GM12878 (cell line): ENCODE measurements at regions of chrX and their contacts with region 1.

Region 1: GRCh38 chrX:11381464-11381863 is 88.3 kb downstream of the AMELX start:
- DNase-seq: peak; percentile 30
- ATAC-seq: peak; percentile 97
- H3K4me3 ChIP-seq: no peak overlapping the region
- H3K27ac ChIP-seq: no peak overlapping the region
- H3K4me1 ChIP-seq: no peaks in the 10 kb centered on the region
- H3K27me3 ChIP-seq: no peaks in the 10 kb centered on the region
- CTCF ChIP-seq: peak; percentile 64 to 71 (median 70)
- EP300 ChIP-seq: no peak
- POLR2A ChIP-seq: no peak
- RAD21 ChIP-seq: peak; percentile 60

Region 2: GRCh38 chrX:11143931-11144678 is 237.4 kb before region 1 on chrX:
- CTCF ChIA-PET with region 1: interaction called, 4 read pairs
- POLR2A ChIA-PET with region 1: no interaction called
- RAD21 ChIA-PET with region 1: no interaction called
- SMC1A ChIA-PET with region 1: interaction called, 4 read pairs
- in situ Hi-C with region 1: no loop called
- intact Hi-C with region 1: loop called (anchors 1 kb)
- DNase-seq: peak; percentile 42
- ATAC-seq: peak; percentile 99
- H3K4me3 ChIP-seq: no peak overlapping the region
- H3K27ac ChIP-seq: no peak overlapping the region
- H3K4me1 ChIP-seq: no peaks in the 10 kb centered on the region
- H3K27me3 ChIP-seq: no peaks in the 10 kb centered on the region
- CTCF ChIP-seq: peak; percentile 54 to 70 (median 56)
- EP300 ChIP-seq: no peak
- POLR2A ChIP-seq: no peak
- RAD21 ChIP-seq: peak; percentile 85

Region 3: GRCh38 chrX:11371106-11371505 is 10.4 kb before region 1 on chrX:
- CTCF ChIA-PET with region 1: interaction called, 30 read pairs
- POLR2A ChIA-PET with region 1: no interaction called
- RAD21 ChIA-PET with region 1: interaction called, 5 read pairs
- SMC1A ChIA-PET with region 1: interaction called, 21 read pairs
- in situ Hi-C with region 1: no loop called
- intact Hi-C with region 1: no loop called
- DNase-seq: no peak
- ATAC-seq: no peak
- H3K4me3 ChIP-seq: no peak overlapping the region
- H3K27ac ChIP-seq: no peak overlapping the region
- H3K4me1 ChIP-seq: no peaks in the 10 kb centered on the region
- H3K27me3 ChIP-seq: no peaks in the 10 kb centered on the region
- CTCF ChIP-seq: no peak
- EP300 ChIP-seq: no peak
- POLR2A ChIP-seq: no peak
- RAD21 ChIP-seq: no peak

Region 4: DNA sequence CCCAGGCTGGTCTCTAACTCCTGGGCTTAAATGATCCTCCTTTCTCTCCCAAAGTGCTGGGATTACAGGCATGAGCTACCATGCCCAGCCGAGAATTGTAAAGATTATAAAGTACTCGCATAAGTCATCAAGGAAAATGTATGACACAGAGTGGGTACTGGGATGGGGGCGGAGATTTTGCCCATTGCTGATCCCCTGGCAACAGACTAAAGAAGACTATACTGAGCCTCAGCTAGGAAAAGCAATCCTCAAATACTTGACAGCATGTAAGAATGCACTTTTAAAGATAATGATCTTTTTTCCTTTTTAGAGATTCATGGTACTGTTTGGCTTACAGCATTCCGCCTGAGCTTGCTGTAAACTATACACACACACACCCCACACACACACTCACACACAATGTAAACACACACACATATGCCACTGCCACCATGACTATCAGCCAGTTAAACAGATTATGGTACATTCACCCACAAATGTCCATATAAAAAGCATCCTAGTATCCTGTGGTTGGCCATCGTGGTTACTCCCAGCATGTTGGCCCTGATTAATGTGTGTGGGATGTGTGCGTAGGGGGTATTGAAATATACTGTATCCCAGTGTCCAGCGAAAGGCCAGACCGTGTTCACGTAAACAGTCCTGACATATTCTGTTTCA is 24.8 kb after region 1 on chrX:
- CTCF ChIA-PET with region 1: interaction called, 10 read pairs
- POLR2A ChIA-PET with region 1: no interaction called
- RAD21 ChIA-PET with region 1: interaction called, 5 read pairs
- SMC1A ChIA-PET with region 1: interaction called, 4 read pairs
- in situ Hi-C with region 1: no loop called
- intact Hi-C with region 1: no loop called
- DNase-seq: no peak
- ATAC-seq: no peak
- H3K4me3 ChIP-seq: no peak overlapping the region
- H3K27ac ChIP-seq: no peak overlapping the region
- H3K4me1 ChIP-seq: no peaks in the 10 kb centered on the region
- H3K27me3 ChIP-seq: no peaks in the 10 kb centered on the region
- CTCF ChIP-seq: no peak
- EP300 ChIP-seq: no peak
- POLR2A ChIP-seq: no peak
- RAD21 ChIP-seq: no peak

Region 5: DNA sequence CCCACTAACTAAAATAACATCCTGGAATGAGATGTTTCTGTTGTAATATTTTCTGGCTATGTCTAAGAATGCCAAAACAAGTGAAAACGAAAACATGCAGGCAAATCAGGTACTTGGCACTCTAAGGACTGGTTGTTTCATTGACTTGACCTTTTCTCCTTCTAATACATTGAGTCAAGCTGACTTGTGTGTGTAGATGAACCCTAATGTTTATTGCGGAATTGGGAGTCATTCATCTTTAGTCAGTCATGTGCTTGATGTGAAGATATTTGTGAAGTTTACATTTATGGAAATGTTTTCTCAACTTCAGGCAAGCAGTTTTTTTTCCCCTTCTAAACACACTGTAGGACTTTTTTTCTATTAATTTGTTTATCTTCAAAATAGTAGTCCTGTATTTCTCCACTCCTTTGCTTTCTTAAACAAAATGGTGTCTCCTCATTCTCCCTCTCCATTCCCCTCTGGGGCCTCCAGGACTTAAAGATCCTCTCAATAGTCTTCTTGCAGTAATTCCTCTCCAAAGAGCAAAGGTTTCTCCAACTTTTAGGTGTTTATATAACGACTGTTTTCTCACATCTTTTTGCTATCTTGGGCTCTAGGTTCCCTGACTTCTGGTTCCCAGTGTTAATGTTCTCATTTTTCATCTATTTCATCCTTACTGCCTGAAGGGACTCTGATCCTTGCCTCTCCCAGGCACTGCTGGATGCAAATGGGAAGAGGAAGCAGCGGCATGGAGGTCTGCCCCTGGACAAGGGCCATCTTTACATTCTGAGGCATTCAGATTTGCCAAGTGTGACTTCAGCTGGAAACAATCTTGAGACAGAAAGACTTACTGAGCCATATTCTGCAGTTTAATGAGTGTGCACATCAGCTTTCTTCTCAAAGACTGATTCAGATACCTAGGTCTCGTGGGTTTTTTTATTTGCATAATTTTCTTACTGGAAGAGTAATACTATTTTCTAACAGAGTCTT is 117.9 kb after region 1 on chrX:
- CTCF ChIA-PET with region 1: no interaction called
- POLR2A ChIA-PET with region 1: no interaction called
- RAD21 ChIA-PET with region 1: no interaction called
- SMC1A ChIA-PET with region 1: no interaction called
- in situ Hi-C with region 1: no loop called
- intact Hi-C with region 1: loop called (anchors 5 kb)
- DNase-seq: no peak
- ATAC-seq: no peak
- H3K4me3 ChIP-seq: no peak overlapping the region
- H3K27ac ChIP-seq: no peak overlapping the region
- H3K4me1 ChIP-seq: no peaks in the 10 kb centered on the region
- H3K27me3 ChIP-seq: no peaks in the 10 kb centered on the region
- CTCF ChIP-seq: no peak
- EP300 ChIP-seq: no peak
- POLR2A ChIP-seq: no peak
- RAD21 ChIP-seq: no peak